AG04450 (cell line): ENCODE measurements at regions of chr14 and their contacts with region 1.

Region 1: DNA sequence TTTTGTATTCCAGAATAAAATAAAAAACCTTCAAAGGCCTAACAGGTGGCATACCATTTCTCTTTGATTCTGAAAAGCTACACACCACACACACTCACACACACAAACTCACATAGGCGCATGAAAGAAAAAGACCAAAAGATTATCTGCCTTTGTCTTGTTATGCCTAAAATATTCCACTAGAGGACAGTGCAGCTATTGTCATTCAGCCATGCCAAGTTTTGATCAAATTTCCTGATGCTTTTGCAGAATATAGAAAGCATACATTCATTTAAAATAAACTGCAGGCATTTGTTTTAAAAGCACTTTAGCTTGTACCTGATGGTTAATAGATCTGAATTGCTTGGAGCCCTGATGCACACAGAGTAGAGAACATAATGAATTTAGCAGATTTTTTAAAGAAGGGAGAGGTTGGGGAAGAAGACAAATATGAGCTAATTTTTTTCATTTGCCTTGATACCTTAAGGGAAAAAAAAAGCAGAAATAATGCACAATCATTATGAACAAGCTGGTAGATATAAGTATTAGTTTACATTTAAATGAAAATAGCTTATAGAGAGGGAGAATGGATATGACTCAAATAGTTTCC is 1766.9 kb upstream of the SEL1L start:
- DNase-seq: no peak
- H3K4me3 ChIP-seq: no peak overlapping the region
- H3K27ac ChIP-seq: no peak overlapping the region
- H3K27me3 ChIP-seq: no peaks in the 10 kb centered on the region
- CTCF ChIP-seq: peak; percentile 99

Region 2: GRCh38 chr14:82999802-83000201 is 300.8 kb before region 1 on chr14:
- CTCF ChIA-PET with region 1: interaction called, 14 read pairs
- POLR2A ChIA-PET with region 1: no interaction called
- DNase-seq: peak; percentile 10
- H3K4me3 ChIP-seq: no peak overlapping the region
- H3K27ac ChIP-seq: no peak overlapping the region
- H3K27me3 ChIP-seq: no peaks in the 10 kb centered on the region
- CTCF ChIP-seq: peak; percentile 69

Region 3: GRCh38 chr14:83463500-83464098 is 163.0 kb after region 1 on chr14:
- CTCF ChIA-PET with region 1: interaction called, 31 read pairs
- POLR2A ChIA-PET with region 1: no interaction called
- DNase-seq: peak; percentile 13
- H3K4me3 ChIP-seq: no peak overlapping the region
- H3K27ac ChIP-seq: no peak overlapping the region
- H3K27me3 ChIP-seq: no peaks in the 10 kb centered on the region
- CTCF ChIP-seq: peak; percentile 83

Region 4: GRCh38 chr14:84202486-84202885 is 901.9 kb after region 1 on chr14:
- CTCF ChIA-PET with region 1: no interaction called
- POLR2A ChIA-PET with region 1: no interaction called
- DNase-seq: no peak
- H3K4me3 ChIP-seq: no peak overlapping the region
- H3K27ac ChIP-seq: no peak overlapping the region
- H3K27me3 ChIP-seq: no peaks in the 10 kb centered on the region
- CTCF ChIP-seq: no peak